Caco-2 (cell line): ENCODE measurements at regions of chr4 and their contacts with region 1.

Region 1: DNA sequence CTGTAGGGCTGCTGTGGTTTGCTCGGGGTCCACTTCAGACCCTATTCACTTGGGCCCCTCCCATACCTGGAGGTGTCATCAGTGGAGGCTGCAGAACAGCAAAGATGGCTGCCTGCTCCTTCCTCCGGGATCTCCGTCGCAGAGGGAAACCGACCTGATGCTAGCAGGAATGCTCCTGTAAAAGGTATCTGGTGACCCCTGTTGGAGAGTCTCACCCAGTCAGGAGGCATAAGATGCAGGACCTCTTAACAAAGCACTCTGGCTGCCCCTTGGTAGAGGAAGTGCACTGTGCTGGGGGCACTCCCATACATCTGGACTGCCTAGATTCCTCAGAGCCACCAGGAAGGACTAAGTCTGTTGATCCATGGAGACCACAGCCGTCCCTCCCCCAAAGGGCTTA is 296.9 kb downstream of the GRID2 start:
- DNase-seq: peak; percentile 9 to 37
- H3K4me3 ChIP-seq: no peak overlapping the region
- H3K4me3 Mint-ChIP-seq: no peak overlapping the region
- H3K27ac Mint-ChIP-seq: no peak overlapping the region
- H3K4me1 ChIP-seq: no peaks in the 10 kb centered on the region
- H3K4me1 Mint-ChIP-seq: no peaks in the 10 kb centered on the region
- H3K27me3 ChIP-seq: no peaks in the 10 kb centered on the region
- H3K27me3 Mint-ChIP-seq: peaks cover 2% of the 10 kb centered on the region
- CTCF ChIP-seq: peak in 1 of 2 experiments; percentile 5

Region 2: GRCh38 chr4:91990726-91991125 is 609.9 kb before region 1 on chr4:
- CTCF ChIA-PET with region 1: no interaction called
- POLR2A ChIA-PET with region 1: no interaction called
- intact Hi-C with region 1: no loop called
- DNase-seq: no peak
- H3K4me3 ChIP-seq: no peak overlapping the region
- H3K4me3 Mint-ChIP-seq: no peak overlapping the region
- H3K27ac Mint-ChIP-seq: no peak overlapping the region
- H3K4me1 ChIP-seq: no peaks in the 10 kb centered on the region
- H3K4me1 Mint-ChIP-seq: no peaks in the 10 kb centered on the region
- H3K27me3 ChIP-seq: no peaks in the 10 kb centered on the region
- H3K27me3 Mint-ChIP-seq: no peaks in the 10 kb centered on the region
- CTCF ChIP-seq: no peak

Region 3: GRCh38 chr4:92406487-92406886 is 194.2 kb before region 1 on chr4:
- CTCF ChIA-PET with region 1: no interaction called
- POLR2A ChIA-PET with region 1: no interaction called
- intact Hi-C with region 1: loop called (anchors 2 kb)
- DNase-seq: no peak
- H3K4me3 ChIP-seq: no peak overlapping the region
- H3K4me3 Mint-ChIP-seq: no peak overlapping the region
- H3K27ac Mint-ChIP-seq: no peak overlapping the region
- H3K4me1 ChIP-seq: no peaks in the 10 kb centered on the region
- H3K4me1 Mint-ChIP-seq: no peaks in the 10 kb centered on the region
- H3K27me3 ChIP-seq: no peaks in the 10 kb centered on the region
- H3K27me3 Mint-ChIP-seq: no peaks in the 10 kb centered on the region
- CTCF ChIP-seq: no peak